ENCODE measurements at regions of chr6 and their contacts with region 1.

Region 1: DNA sequence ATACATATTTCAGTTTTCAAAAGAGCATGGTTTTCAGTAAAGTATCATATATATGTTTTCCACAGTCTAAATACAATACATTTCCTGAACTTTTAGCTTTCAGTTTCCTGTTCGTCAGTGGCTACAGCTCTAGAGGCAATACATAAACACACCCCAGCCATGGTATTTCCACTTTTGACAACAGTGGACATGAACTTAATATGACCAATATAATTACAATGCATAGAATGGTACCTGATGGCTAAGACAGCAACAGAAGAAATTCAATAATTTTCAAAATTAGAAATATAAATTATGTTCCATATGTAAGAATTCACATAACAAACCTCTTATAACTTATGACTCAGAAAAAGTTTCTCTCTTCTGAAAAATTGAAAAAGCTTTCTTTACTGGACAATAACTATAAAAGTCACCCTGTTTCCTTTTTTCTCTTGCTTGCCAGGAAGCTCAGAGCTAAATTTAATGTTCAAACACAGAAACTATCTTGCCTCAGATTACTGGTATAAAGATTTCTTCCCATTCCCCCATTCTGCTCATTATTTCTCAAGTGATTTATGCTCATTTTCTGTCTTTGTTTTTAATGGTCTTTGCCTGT is 19.2 kb downstream of the FKBP5 start:
- DNase-seq: peak in 3 of 14 experiments; percentile 48 to 69 (median 57)
- ATAC-seq: peak; percentile 72
- H3K4me3 ChIP-seq: peak overlapping the region; percentile 25
- H3K4me3 Mint-ChIP-seq: peak overlapping the region; percentile 82
- H3K27ac ChIP-seq: peak overlapping the region; percentile 26 to 58
- H3K27ac Mint-ChIP-seq: peak overlapping the region; percentile 91
- H3K4me1 ChIP-seq: peaks cover 51% of the 10 kb centered on the region
- H3K4me1 Mint-ChIP-seq: peaks cover 57% of the 10 kb centered on the region
- H3K27me3 ChIP-seq: no peaks in the 10 kb centered on the region
- H3K27me3 Mint-ChIP-seq: no peaks in the 10 kb centered on the region
- CTCF ChIP-seq: no peak

Region 2: GRCh38 chr6:35634316-35634715 is 35.2 kb before region 1 on chr6:
- CTCF ChIA-PET with region 1: no interaction called
- POLR2A ChIA-PET with region 1: interaction called, 4 read pairs
- intact Hi-C with region 1: loop called in 1 of 2 experiments (anchors 5 kb)
- DNase-seq: no peak
- ATAC-seq: no peak
- H3K4me3 ChIP-seq: no peak overlapping the region
- H3K4me3 Mint-ChIP-seq: no peak overlapping the region
- H3K27ac ChIP-seq: no peak overlapping the region
- H3K27ac Mint-ChIP-seq: peak overlapping the region; percentile 78
- H3K4me1 ChIP-seq: peaks cover 15% of the 10 kb centered on the region
- H3K4me1 Mint-ChIP-seq: peaks cover 56% of the 10 kb centered on the region
- H3K27me3 ChIP-seq: no peaks in the 10 kb centered on the region
- H3K27me3 Mint-ChIP-seq: no peaks in the 10 kb centered on the region
- CTCF ChIP-seq: no peak

Measured in CD4-positive, alpha-beta T cell (primary cell).